ENCODE measurements at regions of chr2 and their contacts with region 1.

Region 1: GRCh38 chr2:64865073-64865830 is 123.9 kb upstream of the SLC1A4 start:
- DNase-seq: peak; percentile 71 to 78 (median 71)
- ATAC-seq: peak; percentile 83 to 91 (median 86)
- H3K4me3 ChIP-seq: peak overlapping the region; percentile 70 to 80 (median 77)
- H3K27ac ChIP-seq: peak overlapping the region; percentile 64 to 88 (median 79)
- H3K4me1 ChIP-seq: no peaks in the 10 kb centered on the region
- H3K27me3 ChIP-seq: no peaks in the 10 kb centered on the region
- CTCF ChIP-seq: peak; percentile 53 to 99 (median 82)
- POLR2A ChIP-seq: no peak

Region 2: DNA sequence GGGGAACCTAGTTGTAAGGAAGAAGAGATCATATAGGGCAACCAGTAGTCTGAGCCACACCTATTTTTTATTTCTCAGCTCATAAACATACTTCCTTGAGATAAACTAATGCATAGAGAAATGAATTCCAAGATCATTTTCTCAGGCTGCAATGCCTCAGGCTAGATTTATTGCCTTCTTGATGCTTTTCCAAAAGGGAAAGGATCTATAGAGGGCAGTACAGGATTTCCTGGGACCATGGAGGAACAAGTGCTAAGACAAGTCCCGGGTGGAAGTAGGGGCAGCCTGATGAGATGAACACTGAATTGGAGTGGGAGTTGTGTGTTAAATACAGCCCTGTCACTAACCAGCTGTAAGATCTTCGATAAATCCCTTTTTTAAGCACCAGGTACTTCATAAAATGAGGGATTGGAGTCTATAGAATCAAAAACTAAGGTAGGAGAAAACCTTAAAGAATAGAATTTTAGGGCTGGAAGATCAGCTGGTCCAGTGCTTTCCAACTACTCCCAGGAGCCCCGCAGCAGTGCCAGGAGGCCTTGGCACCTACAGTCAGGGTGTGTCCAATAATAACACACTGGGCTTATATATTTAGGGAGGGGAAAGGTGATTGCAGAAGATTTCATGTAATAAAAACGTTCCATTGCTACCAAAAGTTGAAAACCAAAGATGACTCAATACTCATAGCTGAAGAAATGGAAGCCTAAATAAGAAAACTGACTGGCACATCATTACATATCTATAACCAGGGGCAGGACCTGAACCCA is 269.7 kb before region 1 on chr2:
- intact Hi-C with region 1: loop called (anchors 10 kb)
- DNase-seq: no peak
- ATAC-seq: peak; percentile 27 to 45 (median 44)
- H3K4me3 ChIP-seq: no peak overlapping the region
- H3K27ac ChIP-seq: no peak overlapping the region
- H3K4me1 ChIP-seq: no peaks in the 10 kb centered on the region
- H3K27me3 ChIP-seq: no peaks in the 10 kb centered on the region
- CTCF ChIP-seq: peak in 3 of 4 donors; percentile 15 to 36 (median 20)
- POLR2A ChIP-seq: no peak

Region 3: GRCh38 chr2:64622443-64623241 is 242.6 kb before region 1 on chr2:
- intact Hi-C with region 1: loop called in 1 of 2 experiments (anchors 10 kb)
- DNase-seq: no peak
- ATAC-seq: peak in 3 of 4 donors; percentile 8 to 20 (median 14)
- H3K4me3 ChIP-seq: no peak overlapping the region
- H3K27ac ChIP-seq: no peak overlapping the region
- H3K4me1 ChIP-seq: no peaks in the 10 kb centered on the region
- H3K27me3 ChIP-seq: no peaks in the 10 kb centered on the region
- CTCF ChIP-seq: peak in 2 of 4 donors; percentile 10 to 15
- POLR2A ChIP-seq: no peak

Region 4: DNA sequence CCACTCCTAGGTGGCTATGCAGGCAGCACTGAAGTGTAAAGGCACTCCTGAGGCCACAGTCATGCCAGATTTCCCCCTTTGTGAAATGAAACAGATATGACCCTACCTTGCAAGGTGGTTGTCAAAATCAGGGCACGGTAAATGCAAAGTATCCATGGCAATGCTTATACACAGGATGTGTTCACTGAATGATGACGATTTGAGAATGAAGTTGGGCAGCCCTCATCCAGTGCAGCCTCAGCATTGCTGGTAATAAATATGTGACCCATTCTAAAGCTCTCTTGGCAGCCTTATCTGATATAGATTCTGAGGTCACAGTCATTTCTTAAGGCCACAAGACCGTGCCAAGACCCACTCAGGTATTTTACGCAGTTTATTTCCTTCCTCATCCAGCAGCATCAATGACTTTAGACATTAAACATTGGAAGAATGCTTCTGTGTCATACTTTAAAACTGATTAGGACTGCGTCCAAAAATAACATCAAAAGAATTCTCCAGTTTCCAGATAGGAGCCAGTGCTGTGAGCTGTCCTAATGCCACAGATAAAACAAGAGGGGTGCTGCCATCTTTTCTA is 86.0 kb before region 1 on chr2:
- intact Hi-C with region 1: no loop called
- DNase-seq: no peak
- ATAC-seq: no peak
- H3K4me3 ChIP-seq: no peak overlapping the region
- H3K27ac ChIP-seq: no peak overlapping the region
- H3K4me1 ChIP-seq: no peaks in the 10 kb centered on the region
- H3K27me3 ChIP-seq: no peaks in the 10 kb centered on the region
- CTCF ChIP-seq: no peak
- POLR2A ChIP-seq: no peak